Pancreas (tissue), 10 donors: ENCODE measurements at regions of chr4 and their contacts with region 1.

Region 1: DNA sequence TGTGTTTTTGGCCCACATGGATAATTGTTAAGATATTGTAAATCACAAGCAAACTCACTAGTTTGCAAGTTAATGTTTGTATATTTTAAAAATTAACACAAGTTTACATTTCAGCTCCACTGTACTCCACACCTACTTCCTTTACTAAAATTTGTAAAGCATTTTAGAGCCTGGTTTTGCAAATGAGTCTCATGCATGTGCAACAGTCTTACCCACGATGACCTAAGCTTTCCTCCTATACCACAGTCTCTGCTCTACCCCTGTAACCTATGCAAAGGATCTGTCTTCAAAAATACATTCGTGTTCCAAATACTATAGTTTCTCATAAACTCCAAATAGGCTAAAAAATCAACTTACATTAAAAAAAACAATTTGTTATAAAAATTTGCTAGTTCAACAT is 10.2 kb downstream of the BDH2 start:
- DNase-seq: no peak
- ATAC-seq: no peak
- H3K4me3 ChIP-seq: no peak overlapping the region
- H3K27ac ChIP-seq: no peak overlapping the region
- H3K4me1 ChIP-seq: no peaks in the 10 kb centered on the region
- H3K27me3 ChIP-seq: no peaks in the 10 kb centered on the region
- CTCF ChIP-seq: no peak

Region 2: GRCh38 chr4:102610007-102610406 is 479.5 kb before region 1 on chr4:
- intact Hi-C with region 1: loop called in 1 of 3 experiments (anchors 10 kb)
- DNase-seq: no peak
- ATAC-seq: no peak
- H3K4me3 ChIP-seq: no peak overlapping the region
- H3K27ac ChIP-seq: no peak overlapping the region
- H3K4me1 ChIP-seq: no peaks in the 10 kb centered on the region
- H3K27me3 ChIP-seq: no peaks in the 10 kb centered on the region
- CTCF ChIP-seq: no peak

Region 3: DNA sequence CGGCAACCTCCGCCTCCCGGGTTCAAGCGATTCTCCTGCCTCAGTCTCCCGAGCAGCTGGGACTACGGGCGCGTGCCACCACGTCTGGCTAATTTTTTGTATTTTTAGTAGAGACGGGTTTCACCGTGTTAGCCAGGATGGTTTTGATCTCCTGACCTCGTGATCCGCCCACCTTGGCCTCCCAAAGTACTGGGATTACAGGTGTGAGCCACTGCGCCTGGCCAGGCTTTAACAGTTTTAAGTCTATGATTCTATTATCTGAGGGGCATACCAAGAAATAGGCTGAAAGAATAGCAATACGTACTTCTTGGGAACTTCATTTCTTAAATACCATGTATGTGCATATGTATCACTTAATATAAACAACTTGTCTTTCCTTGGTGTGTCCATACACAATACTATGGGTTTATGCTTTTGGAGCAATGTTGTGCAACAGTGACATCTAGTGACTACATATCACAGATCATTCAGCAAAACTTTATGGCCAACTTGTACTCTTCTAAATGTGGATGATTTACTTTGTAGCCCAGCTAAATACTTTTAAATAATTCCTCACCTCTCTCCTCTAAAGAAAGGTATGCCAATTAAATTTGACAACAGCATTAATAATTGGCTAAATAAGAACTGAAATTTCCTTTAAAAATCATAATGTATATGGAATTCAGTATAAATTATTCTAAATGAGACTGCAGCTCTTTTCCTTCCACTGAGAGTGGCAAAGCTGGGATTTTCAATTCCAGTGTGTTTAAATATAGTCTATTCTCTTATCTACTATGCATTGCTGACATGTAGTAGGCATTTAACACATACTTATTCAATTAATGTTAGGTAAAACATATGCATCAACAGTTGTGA is 80.4 kb before region 1 on chr4:
- intact Hi-C with region 1: no loop called
- DNase-seq: peak in 1 of 6 donors; percentile 28
- ATAC-seq: peak; percentile 38 to 87 (median 74)
- H3K4me3 ChIP-seq: no peak overlapping the region
- H3K27ac ChIP-seq: no peak overlapping the region
- H3K4me1 ChIP-seq: peaks cover 17 to 26% (median 18%) of the 10 kb centered on the region in 3 donors
- H3K27me3 ChIP-seq: no peaks in the 10 kb centered on the region
- CTCF ChIP-seq: peak in 3 of 4 donors; percentile 37 to 70 (median 53)